RWPE1 (cell line): ENCODE measurements at regions of chr5 and their contacts with region 1.

Region 1: DNA sequence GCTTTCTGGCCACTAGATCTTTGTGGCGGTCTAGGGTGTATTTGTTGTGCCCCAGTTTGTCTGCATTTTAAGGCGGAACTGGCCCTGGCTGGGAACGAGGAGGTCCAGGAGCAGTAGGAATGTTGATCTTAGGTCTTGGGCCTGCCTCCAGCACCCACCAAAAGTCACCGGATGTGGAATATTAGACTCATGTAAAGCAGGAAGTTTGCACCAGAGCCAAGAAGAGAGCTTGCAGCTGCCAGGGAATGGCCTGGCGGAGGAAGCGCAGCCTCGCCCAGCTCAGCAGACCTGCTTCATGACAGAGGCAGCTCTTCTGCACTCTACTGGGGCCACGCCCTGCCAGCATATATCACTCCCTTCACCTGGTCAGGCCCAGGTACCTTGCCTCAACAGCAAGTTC is 3.3 kb downstream of the GPX3 start:
- DNase-seq: peak; percentile 85
- H3K27ac ChIP-seq: peak overlapping the region; percentile 83
- CTCF ChIP-seq: no peak

Region 2: GRCh38 chr5:150492621-150493020 is 531.0 kb before region 1 on chr5:
- CTCF ChIA-PET with region 1: no interaction called
- POLR2A ChIA-PET with region 1: interaction called, 17 read pairs
- DNase-seq: peak; percentile 98
- H3K27ac ChIP-seq: peak overlapping the region; percentile 95
- CTCF ChIP-seq: no peak

Region 3: DNA sequence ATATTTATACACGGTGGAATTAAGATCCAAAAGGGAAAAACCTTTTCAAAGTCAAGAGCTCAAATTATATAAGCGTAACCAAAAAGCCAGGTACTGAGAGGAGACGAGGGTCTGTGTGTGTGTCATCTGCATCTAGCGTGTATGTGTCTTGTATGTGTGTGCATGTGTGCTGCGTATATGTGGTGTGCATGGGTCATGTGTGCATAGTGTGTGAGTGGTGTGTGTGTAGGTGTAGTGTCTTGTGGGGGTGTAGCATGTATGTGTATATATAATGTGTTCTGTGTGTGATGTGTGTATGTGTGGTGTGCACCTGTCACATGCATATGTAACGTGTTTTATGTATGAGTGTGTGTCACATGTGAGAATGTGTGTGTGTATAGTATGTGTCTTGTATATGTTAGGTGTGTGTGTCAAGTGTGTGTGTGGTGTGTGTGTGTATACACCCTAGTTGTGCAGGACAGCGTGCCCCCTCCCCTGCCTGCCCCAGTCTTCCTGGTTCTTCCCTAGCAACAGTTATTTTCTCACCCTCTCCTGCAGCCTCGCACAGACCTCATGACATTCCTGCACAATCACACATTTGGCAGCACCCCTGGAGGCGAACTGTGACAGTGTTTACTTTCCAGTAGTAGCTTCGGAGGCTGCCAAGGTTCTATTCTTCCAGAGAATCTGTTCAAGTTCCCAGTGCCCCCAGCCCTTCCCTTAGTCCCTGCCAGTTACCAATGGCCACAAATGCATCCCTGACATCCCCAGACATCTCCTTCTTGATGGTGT is 84.3 kb after region 1 on chr5:
- CTCF ChIA-PET with region 1: no interaction called
- POLR2A ChIA-PET with region 1: no interaction called
- DNase-seq: no peak
- H3K27ac ChIP-seq: no peak overlapping the region
- CTCF ChIP-seq: no peak